ENCODE measurements at regions of chr6 and their contacts with region 1.

Region 1: GRCh38 chr6:153096031-153096430 is 35.1 kb downstream of the RGS17 start:
- DNase-seq: no peak
- H3K4me3 Mint-ChIP-seq: no peak overlapping the region
- H3K27ac Mint-ChIP-seq: no peak overlapping the region
- H3K4me1 Mint-ChIP-seq: peaks cover 35% of the 10 kb centered on the region
- H3K27me3 Mint-ChIP-seq: no peaks in the 10 kb centered on the region
- CTCF ChIP-seq: no peak

Region 2: GRCh38 chr6:152969688-152970418 is 126.2 kb before region 1 on chr6:
- CTCF ChIA-PET with region 1: no interaction called
- POLR2A ChIA-PET with region 1: no interaction called
- intact Hi-C with region 1: no loop called
- DNase-seq: no peak
- H3K4me3 Mint-ChIP-seq: no peak overlapping the region
- H3K27ac Mint-ChIP-seq: no peak overlapping the region
- H3K4me1 Mint-ChIP-seq: peaks cover under 1% of the 10 kb centered on the region
- H3K27me3 Mint-ChIP-seq: peaks cover 4% of the 10 kb centered on the region
- CTCF ChIP-seq: no peak

Region 3: GRCh38 chr6:153056261-153056660 is 39.8 kb before region 1 on chr6:
- CTCF ChIA-PET with region 1: no interaction called
- POLR2A ChIA-PET with region 1: no interaction called
- intact Hi-C with region 1: no loop called
- DNase-seq: no peak
- H3K4me3 Mint-ChIP-seq: no peak overlapping the region
- H3K27ac Mint-ChIP-seq: no peak overlapping the region
- H3K4me1 Mint-ChIP-seq: no peaks in the 10 kb centered on the region
- H3K27me3 Mint-ChIP-seq: no peaks in the 10 kb centered on the region
- CTCF ChIP-seq: no peak

Region 4: DNA sequence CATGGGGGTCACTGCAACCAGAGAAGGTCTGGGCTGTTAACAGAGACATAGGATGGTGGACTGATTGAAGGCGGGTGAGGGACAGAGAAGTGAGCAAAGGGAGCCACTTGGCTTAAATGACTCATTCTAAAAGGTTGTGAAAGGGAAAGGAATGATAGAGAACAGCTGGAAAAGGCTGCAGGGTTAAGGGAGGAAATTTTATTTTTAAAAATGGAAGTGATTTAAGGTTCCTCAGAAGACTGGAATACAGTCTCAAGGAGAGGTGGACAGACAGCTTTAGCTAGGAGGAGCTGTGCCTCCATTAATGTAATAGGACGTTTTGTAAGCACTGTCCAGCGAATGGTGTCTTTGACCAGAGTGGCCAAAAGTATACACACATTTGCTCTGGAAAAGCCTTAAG is 11.6 kb before region 1 on chr6:
- CTCF ChIA-PET with region 1: no interaction called
- POLR2A ChIA-PET with region 1: interaction called, 14 read pairs
- intact Hi-C with region 1: no loop called
- DNase-seq: peak; percentile 38
- H3K4me3 Mint-ChIP-seq: no peak overlapping the region
- H3K27ac Mint-ChIP-seq: no peak overlapping the region
- H3K4me1 Mint-ChIP-seq: peaks cover 18% of the 10 kb centered on the region
- H3K27me3 Mint-ChIP-seq: no peaks in the 10 kb centered on the region
- CTCF ChIP-seq: no peak

Region 5: GRCh38 chr6:153117986-153118879 is 22.2 kb after region 1 on chr6:
- CTCF ChIA-PET with region 1: no interaction called
- POLR2A ChIA-PET with region 1: interaction called, 4 read pairs
- intact Hi-C with region 1: loop called (anchors 2 kb)
- DNase-seq: peak; percentile 83
- H3K4me3 Mint-ChIP-seq: no peak overlapping the region
- H3K27ac Mint-ChIP-seq: peak overlapping the region; percentile 52
- H3K4me1 Mint-ChIP-seq: peaks cover 24% of the 10 kb centered on the region
- H3K27me3 Mint-ChIP-seq: no peaks in the 10 kb centered on the region
- CTCF ChIP-seq: no peak

Region 6: DNA sequence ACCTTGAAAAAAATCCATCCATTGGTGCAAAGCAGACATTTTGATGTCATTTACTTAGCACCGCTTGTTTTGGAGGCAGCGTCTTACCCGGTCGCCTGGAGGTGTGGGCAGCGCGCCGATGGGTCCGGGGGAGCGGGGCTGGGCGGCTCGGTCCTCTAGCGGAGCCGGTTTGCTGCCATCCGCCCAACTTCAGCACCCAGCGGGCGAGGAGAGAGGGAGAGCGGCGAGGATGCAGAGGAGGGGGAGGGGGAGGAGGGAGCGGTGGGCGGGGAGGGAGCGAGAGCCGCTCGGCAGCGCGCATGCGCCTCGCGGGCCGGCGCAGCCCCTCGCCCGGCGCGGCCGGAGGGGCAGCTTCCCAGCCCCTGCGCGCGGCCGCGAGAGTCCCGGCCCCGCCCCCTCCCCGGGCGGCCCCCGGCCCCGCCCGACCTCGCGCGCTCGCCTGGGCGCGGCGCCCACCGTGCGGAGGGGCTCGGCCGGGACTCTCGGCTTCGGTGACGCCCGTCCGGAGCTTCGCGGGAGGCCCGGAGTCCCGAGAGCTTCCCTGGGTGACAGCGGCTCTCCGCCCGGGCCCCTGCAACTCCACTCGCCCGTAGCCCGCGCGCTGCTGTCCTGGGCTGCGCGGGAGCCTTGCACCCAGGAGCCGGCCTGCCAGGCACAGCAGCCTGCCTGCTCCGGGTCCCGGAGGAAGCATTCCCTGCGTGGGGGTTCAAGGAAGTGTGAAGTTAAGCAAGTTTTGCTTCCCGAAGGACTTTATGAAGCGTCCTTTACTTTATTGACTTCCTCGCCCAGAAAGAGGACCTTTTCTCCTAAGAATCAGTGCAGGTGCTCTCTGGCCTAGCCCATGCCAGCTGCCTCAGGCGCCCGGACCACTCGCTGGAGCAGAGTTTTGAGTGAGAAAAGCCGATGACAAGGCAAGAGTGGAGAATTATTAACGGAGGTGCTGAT is 35.3 kb after region 1 on chr6 and contains the start of gene RGS17:
- CTCF ChIA-PET with region 1: no interaction called
- POLR2A ChIA-PET with region 1: no interaction called
- intact Hi-C with region 1: no loop called
- DNase-seq: peak; percentile 67
- H3K4me3 Mint-ChIP-seq: peak within 1 kb of the TSS; percentile 83
- H3K27ac Mint-ChIP-seq: peak within 1 kb of the TSS; percentile 75
- H3K4me1 Mint-ChIP-seq: peaks cover 5% of the 10 kb centered on the region
- H3K27me3 Mint-ChIP-seq: no peaks in the 10 kb centered on the region
- CTCF ChIP-seq: no peak
- total RNA-seq, gene RGS17: 2.5 and 3.7 TPM in 2 replicates

Region 7: GRCh38 chr6:153328169-153328568 is 232.1 kb after region 1 on chr6:
- CTCF ChIA-PET with region 1: no interaction called
- POLR2A ChIA-PET with region 1: no interaction called
- intact Hi-C with region 1: no loop called
- DNase-seq: peak; percentile 73
- H3K4me3 Mint-ChIP-seq: no peak overlapping the region
- H3K27ac Mint-ChIP-seq: no peak overlapping the region
- H3K4me1 Mint-ChIP-seq: peaks cover 6% of the 10 kb centered on the region
- H3K27me3 Mint-ChIP-seq: no peaks in the 10 kb centered on the region
- CTCF ChIP-seq: no peak